Activated CD4-positive, alpha-beta T cell treated with anti-CD3 and anti-CD28 coated beads for 36 hours (primary cell): ENCODE measurements at regions of chr18 and their contacts with region 1.

Region 1: GRCh38 chr18:65808759-65809158 is 57.9 kb downstream of the CDH7 start:
- DNase-seq: no peak
- ATAC-seq: no peak
- H3K4me3 Mint-ChIP-seq: no peak overlapping the region
- H3K27ac Mint-ChIP-seq: no peak overlapping the region
- H3K4me1 Mint-ChIP-seq: no peaks in the 10 kb centered on the region
- H3K27me3 Mint-ChIP-seq: no peaks in the 10 kb centered on the region

Region 2: DNA sequence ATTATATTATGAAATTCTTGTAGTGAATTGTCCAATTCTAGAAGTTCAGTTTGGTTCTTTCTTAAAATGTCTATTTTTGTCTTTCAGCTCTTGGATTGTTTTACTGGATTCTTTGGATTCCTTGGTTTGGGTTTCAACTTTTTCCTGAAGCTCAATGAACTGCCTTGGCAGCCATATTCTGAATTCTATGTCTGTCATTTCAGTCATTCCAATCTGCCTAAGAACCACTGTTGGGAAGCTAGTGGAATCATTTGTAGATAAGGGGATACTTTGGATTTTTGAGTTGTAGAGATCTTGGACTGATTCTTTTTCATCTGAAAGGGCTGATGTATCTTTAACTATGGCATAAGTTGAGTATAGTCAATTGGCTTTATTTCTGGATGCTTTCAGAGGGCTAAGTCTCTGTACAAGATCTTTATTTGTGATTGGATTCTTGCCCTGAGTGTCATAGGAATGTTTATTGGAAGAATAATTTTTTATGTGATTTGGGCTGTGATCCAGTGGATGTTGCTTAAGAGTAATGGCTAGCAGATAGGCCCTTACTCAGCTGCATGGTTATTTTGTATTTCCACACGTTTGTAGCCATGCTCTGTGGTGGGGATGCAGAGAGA is 1991.2 kb before region 1 on chr18:
- CTCF ChIA-PET with region 1: no interaction called
- POLR2A ChIA-PET with region 1: no interaction called
- intact Hi-C with region 1: loop called in 1 of 2 experiments (anchors 5 kb)
- DNase-seq: no peak
- ATAC-seq: no peak
- H3K4me3 Mint-ChIP-seq: no peak overlapping the region
- H3K27ac Mint-ChIP-seq: no peak overlapping the region
- H3K4me1 Mint-ChIP-seq: peaks cover 3% of the 10 kb centered on the region
- H3K27me3 Mint-ChIP-seq: peaks cover 9% of the 10 kb centered on the region

Region 3: DNA sequence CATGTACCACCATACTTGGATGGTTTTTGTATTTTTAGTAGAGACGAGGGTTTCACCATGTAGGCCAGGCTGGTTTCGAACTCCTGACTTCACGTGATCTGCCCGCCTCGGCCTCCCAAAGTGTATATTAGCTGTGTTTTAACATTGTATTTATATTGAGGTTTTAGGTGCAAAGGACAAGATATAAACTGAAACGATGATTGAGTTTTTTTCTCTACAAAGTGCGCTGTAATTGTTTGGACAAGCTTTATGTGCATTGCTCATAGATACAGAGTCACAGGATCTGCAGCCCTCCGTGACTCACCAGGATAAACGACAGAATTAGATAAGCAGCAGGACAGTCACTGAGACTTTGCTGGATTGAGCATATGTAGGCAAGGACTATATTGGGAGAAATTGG is 40.4 kb before region 1 on chr18:
- CTCF ChIA-PET with region 1: no interaction called
- POLR2A ChIA-PET with region 1: no interaction called
- intact Hi-C with region 1: no loop called
- DNase-seq: no peak
- ATAC-seq: no peak
- H3K4me3 Mint-ChIP-seq: no peak overlapping the region
- H3K27ac Mint-ChIP-seq: no peak overlapping the region
- H3K4me1 Mint-ChIP-seq: no peaks in the 10 kb centered on the region
- H3K27me3 Mint-ChIP-seq: no peaks in the 10 kb centered on the region

Region 4: DNA sequence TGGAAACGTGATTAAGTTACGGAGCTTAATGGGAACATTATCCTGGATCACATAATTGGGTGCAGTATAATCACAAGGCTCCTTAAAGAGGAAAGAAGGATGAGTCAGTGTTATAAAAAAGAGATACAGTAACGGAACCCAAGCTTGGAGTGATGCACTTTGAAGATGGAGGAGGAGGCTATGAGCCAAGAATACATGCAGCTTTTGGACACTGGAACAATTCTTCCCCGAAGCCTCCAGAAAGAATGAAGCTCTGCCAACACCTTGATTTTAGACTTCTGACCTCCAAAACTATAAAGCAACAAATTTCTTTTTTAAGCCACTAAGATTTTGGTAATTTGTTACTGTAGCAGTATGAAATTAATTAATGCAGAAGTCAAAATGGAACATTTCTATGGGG is 27.1 kb after region 1 on chr18:
- CTCF ChIA-PET with region 1: no interaction called
- POLR2A ChIA-PET with region 1: no interaction called
- intact Hi-C with region 1: no loop called
- DNase-seq: no peak
- ATAC-seq: no peak
- H3K4me3 Mint-ChIP-seq: no peak overlapping the region
- H3K27ac Mint-ChIP-seq: no peak overlapping the region
- H3K4me1 Mint-ChIP-seq: no peaks in the 10 kb centered on the region
- H3K27me3 Mint-ChIP-seq: no peaks in the 10 kb centered on the region